ENCODE measurements at regions of chr13 and their contacts with region 1.

Region 1: DNA sequence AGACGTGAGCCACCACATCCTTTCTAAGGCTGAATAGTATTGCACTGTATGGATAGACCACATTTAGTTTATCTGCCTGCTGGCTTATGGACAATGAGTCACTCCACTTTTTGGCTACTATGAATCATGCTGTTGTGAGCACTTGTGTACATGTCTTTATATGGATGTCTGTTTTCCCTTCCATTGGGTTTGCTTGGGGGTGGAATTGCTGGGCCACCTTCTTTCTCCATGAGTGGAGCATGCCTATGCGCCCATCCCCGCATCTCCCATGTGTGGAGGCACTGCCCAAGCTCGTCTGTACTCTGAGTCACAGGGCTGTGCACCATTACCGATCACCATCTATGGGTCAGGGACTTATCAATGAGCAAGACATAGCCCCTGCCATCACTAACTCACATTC is 127.2 kb upstream of the GJB6 start:
- DNase-seq: peak; percentile 99
- H3K4me3 ChIP-seq: no peak overlapping the region
- H3K27ac ChIP-seq: peak overlapping the region; percentile 83
- H3K4me1 ChIP-seq: peaks cover 29% of the 10 kb centered on the region
- H3K27me3 ChIP-seq: no peaks in the 10 kb centered on the region
- CTCF ChIP-seq: no peak

Region 2: DNA sequence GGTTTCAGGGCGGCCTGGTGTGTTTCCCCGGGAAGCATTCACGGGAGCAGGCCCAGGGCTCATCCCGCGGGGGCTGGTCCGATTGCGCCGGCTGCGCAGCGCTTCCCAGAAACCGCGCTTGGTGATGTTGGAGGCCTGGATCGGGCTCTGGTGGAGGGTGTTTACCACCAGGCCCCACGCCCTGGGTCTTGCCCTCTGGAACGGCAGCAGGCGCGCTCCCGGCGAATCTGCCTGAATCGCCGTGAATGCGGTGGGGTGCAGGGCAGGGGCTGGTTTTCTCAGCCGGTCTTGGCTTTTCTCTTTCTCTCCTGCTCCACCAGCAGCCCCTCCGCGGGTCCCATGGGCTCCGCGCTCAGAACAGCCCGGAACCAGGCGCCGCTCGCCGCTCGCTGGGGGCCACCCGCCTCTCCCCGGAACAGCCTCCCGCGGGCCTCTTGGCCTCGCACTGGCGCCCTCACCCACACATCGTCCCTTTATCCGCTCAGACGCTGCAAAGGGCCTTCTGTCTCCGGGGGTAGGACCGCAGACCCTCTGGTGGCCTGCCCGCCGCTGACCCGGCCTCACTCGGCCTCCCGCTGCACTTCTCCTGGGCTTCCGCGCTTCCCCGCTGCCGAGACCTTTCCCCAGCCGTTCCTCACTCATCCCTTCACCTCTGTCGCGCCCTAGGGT is 57.8 kb before region 1 on chr13:
- CTCF ChIA-PET with region 1: no interaction called
- dilution Hi-C with region 1: no loop called
- in situ Hi-C with region 1: no loop called
- intact Hi-C with region 1: loop called (anchors 1 kb)
- DNase-seq: no peak
- H3K4me3 ChIP-seq: no peak overlapping the region
- H3K27ac ChIP-seq: no peak overlapping the region
- H3K4me1 ChIP-seq: peaks cover 21% of the 10 kb centered on the region
- H3K27me3 ChIP-seq: no peaks in the 10 kb centered on the region
- CTCF ChIP-seq: no peak

Region 3: GRCh38 chr13:20387441-20387971 is 28.2 kb after region 1 on chr13:
- CTCF ChIA-PET with region 1: no interaction called
- dilution Hi-C with region 1: no loop called
- in situ Hi-C with region 1: no loop called
- intact Hi-C with region 1: loop called (anchors 1 kb)
- DNase-seq: peak; percentile 87
- H3K4me3 ChIP-seq: no peak overlapping the region
- H3K27ac ChIP-seq: peak overlapping the region; percentile 73
- H3K4me1 ChIP-seq: peaks cover 21% of the 10 kb centered on the region
- H3K27me3 ChIP-seq: no peaks in the 10 kb centered on the region
- CTCF ChIP-seq: no peak

Region 4: DNA sequence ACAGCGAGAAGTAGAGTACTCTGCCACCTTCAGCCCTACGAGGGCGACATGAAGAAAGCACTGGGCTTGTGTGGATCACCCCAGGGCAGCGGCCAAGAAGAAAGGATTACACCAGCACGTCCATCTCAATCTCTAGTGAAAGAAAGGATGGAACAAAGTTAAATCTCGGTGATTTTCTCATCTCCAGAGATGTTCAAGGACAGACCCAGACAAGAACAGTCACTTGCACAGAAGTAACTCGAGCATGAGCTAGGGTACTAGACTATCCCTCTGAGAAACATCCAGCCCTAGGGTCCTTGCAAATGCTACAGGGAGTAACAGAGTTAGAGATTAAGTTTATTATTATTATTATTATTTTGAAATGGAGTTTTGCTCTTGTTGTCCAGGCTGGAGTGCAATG is 59.6 kb after region 1 on chr13:
- CTCF ChIA-PET with region 1: no interaction called
- dilution Hi-C with region 1: no loop called
- in situ Hi-C with region 1: no loop called
- intact Hi-C with region 1: loop called (anchors 1 kb)
- DNase-seq: no peak
- H3K4me3 ChIP-seq: no peak overlapping the region
- H3K27ac ChIP-seq: peak overlapping the region; percentile 56
- H3K4me1 ChIP-seq: peaks cover 7% of the 10 kb centered on the region
- H3K27me3 ChIP-seq: no peaks in the 10 kb centered on the region
- CTCF ChIP-seq: no peak

Measured in mammary epithelial cell (primary cell).